ENCODE measurements at regions of chrX and their contacts with region 1.

Region 1: GRCh38 chrX:42948723-42949657 is 171.0 kb upstream of the PPP1R2C start:
- DNase-seq: peak; percentile 29 to 58 (median 35)
- H3K4me3 ChIP-seq: no peak overlapping the region
- H3K4me3 Mint-ChIP-seq: peak overlapping the region; percentile 18 to 79 (median 42)
- H3K27ac ChIP-seq: peak overlapping the region; percentile 49
- H3K27ac Mint-ChIP-seq: peak overlapping the region; percentile 87 to 95 (median 90)
- H3K4me1 ChIP-seq: peaks cover 77% of the 10 kb centered on the region
- H3K4me1 Mint-ChIP-seq: peaks cover 44 to 77% (median 64%) of the 10 kb centered on the region in 4 donors
- H3K27me3 ChIP-seq: no peaks in the 10 kb centered on the region
- H3K27me3 Mint-ChIP-seq: no peaks in the 10 kb centered on the region

Region 2: GRCh38 chrX:43333543-43333942 is 384.6 kb after region 1 on chrX:
- CTCF ChIA-PET with region 1: no interaction called
- POLR2A ChIA-PET with region 1: no interaction called
- intact Hi-C with region 1: loop called (anchors 5 kb)
- DNase-seq: peak in 1 of 5 donors; percentile 7
- H3K4me3 ChIP-seq: no peak overlapping the region
- H3K4me3 Mint-ChIP-seq: no peak overlapping the region
- H3K27ac ChIP-seq: no peak overlapping the region
- H3K27ac Mint-ChIP-seq: peak overlapping the region in 1 of 7 donors; percentile 13
- H3K4me1 ChIP-seq: no peaks in the 10 kb centered on the region
- H3K4me1 Mint-ChIP-seq: peaks cover 0 to 2% (median 0%) of the 10 kb centered on the region in 4 donors
- H3K27me3 ChIP-seq: no peaks in the 10 kb centered on the region
- H3K27me3 Mint-ChIP-seq: no peaks in the 10 kb centered on the region